ENCODE measurements at regions of chr12 and their contacts with region 1.

Region 1: GRCh38 chr12:10098791-10099190 is at the start of gene CLEC1A:
- DNase-seq: no peak
- ATAC-seq: peak in 2 of 4 donors; percentile 36 to 42
- H3K4me3 ChIP-seq: peak within 1 kb of the TSS; percentile 53
- H3K27ac ChIP-seq: peak within 1 kb of the TSS; percentile 48
- H3K4me1 ChIP-seq: no peaks in the 10 kb centered on the region
- H3K27me3 ChIP-seq: peaks cover 0 to 3% (median 1%) of the 10 kb centered on the region in 3 donors
- CTCF ChIP-seq: no peak
- total RNA-seq, gene CLEC1A: 1.5 to 3.8 (median 1.8) TPM

Region 2: GRCh38 chr12:9992296-9992695 is 106.5 kb before region 1 on chr12:
- intact Hi-C with region 1: no loop called
- DNase-seq: no peak
- ATAC-seq: no peak
- H3K4me3 ChIP-seq: no peak overlapping the region
- H3K27ac ChIP-seq: no peak overlapping the region
- H3K4me1 ChIP-seq: no peaks in the 10 kb centered on the region
- H3K27me3 ChIP-seq: peaks cover 0 to 3% (median 0%) of the 10 kb centered on the region in 3 donors
- CTCF ChIP-seq: no peak

Region 3: GRCh38 chr12:10082117-10082874 is 16.5 kb before region 1 on chr12:
- intact Hi-C with region 1: loop called in 1 of 2 experiments (anchors 1 kb)
- DNase-seq: no peak
- ATAC-seq: no peak
- H3K4me3 ChIP-seq: no peak overlapping the region
- H3K27ac ChIP-seq: no peak overlapping the region
- H3K4me1 ChIP-seq: no peaks in the 10 kb centered on the region
- H3K27me3 ChIP-seq: no peaks in the 10 kb centered on the region
- CTCF ChIP-seq: no peak

Region 4: DNA sequence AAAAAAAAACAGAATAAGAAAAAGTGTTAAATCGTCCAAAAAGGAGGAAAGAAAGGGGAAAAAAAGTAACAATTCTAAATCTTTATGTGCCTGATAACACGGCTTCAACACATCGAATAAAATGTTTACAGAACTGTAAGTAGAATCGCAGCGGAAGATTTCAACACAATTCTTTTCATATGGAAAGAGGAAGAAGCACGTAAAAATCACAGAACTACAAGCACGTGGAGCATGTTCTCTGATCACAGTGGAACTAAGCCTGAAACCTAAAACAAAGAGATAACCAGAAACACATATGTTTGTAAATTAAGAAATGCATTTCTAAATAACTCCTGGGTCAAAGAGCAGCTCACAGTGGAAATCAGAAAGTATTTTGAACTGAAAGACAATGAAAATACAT is 22.5 kb after region 1 on chr12:
- intact Hi-C with region 1: no loop called
- DNase-seq: no peak
- ATAC-seq: no peak
- H3K4me3 ChIP-seq: no peak overlapping the region
- H3K27ac ChIP-seq: no peak overlapping the region
- H3K4me1 ChIP-seq: no peaks in the 10 kb centered on the region
- H3K27me3 ChIP-seq: no peaks in the 10 kb centered on the region
- CTCF ChIP-seq: no peak